ENCODE measurements at regions of chr7 and their contacts with region 1.

Region 1: DNA sequence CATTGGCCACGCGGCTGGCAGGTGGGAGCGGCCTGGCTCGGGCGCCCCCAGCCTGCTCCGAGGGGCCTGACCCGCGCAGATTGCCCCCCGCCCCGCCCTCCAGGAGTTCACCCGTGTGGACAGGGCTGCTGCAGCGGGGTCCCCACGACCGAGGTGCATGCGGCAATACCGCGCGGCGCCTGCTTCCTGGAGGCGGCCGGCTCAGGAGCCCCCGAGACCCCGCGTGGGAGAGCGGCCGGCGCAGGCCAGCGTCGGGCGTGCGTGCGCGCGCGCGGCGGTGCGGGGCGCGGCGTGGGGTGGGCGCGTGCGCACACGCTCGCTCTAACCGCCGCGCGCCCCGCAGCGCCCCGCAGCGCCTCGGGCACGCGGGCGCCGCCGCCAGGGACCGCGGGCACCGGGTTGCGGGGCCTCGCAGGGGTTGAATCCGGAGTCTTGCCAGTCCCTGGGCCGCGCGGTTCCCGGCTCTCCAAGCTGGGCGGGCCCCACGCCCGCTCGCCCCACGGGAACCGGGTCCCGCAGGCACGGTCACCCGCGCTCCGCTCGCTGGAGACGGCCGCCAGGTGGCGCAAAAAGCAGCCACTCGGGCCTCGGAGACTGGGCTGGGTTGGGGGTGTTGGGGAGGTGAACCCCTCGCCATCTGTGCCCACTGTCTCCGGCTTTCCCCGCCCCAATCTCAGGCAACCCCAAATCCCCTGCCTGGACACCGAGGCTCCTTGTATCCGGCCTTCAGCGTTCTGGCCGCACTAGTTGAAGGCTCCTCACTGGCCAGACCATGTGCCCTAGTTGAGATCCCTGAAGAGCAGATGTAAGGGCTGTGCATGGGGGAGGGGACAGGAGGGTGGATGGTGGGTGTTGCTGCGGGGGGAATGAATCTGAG is 1.3 kb upstream of the ACHE start:
- DNase-seq: no peak

Region 2: DNA sequence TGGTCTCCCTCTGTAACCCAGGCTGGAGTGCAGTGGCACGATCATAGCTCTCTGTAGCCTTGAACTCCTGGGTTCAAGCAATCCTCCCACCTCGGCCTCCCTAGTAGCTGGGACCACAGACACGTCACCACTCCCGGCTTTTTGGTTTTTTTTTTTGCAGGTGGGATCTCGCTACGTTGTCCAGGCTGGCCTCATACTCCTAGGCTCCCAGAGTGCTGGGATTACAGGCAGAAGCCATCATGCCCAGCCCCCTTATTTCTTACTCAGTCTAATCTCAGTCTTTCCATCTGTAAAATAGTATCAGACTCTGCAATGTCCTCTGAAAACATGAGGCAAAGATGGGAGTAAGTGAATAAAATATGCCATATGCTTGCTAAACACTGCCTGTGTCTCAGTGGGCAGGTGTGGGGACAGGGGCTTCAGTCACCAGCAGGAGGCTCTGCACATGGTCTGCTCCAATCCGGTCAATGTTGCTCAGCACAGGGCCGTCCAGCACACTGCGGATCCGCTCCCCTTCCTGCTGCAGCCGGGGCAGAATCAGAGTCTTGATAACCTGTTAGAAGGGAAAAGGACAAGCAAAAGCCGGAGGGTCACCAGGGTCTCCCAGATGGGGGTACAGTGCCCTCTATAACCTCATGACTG is 787.3 kb before region 1 on chr7:
- intact Hi-C with region 1: no loop called
- DNase-seq: no peak

Region 3: DNA sequence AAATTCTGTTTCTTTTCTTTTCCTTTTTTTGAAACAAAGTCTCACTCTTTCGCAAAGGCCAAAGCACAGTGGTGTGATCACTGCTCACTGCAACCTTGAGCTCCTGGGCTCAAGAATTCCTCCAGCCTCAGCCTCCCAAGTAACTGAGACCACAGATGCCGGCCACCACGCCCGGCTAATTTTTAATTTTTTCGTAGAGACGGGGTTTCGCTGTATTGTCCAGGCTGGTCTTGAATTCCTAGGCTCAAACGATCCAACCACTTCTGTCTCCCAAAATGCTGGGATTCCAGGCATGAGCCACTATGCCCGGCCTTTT is 162.6 kb after region 1 on chr7:
- intact Hi-C with region 1: loop called (anchors 1 kb)
- DNase-seq: no peak